ENCODE measurements at regions of chr11 and their contacts with region 1.

Region 1: GRCh38 chr11:62726915-62727763 is at the start of gene HNRNPUL2:
- DNase-seq: peak; percentile 98 to 99 (median 99)
- ATAC-seq: peak; percentile 79 to 81
- H3K4me3 Mint-ChIP-seq: peak within 1 kb of the TSS; percentile 92 to 99 (median 96)
- H3K27ac Mint-ChIP-seq: peak within 1 kb of the TSS; percentile 90 to 100 (median 99)
- H3K4me1 Mint-ChIP-seq: peaks cover 25 to 66% (median 53%) of the 10 kb centered on the region in 4 donors
- H3K27me3 Mint-ChIP-seq: peaks cover 0 to 2% (median 0%) of the 10 kb centered on the region in 5 donors
- polyA plus RNA-seq, gene HNRNPUL2: 0.99 to 3.0 (median 1.0) TPM

Region 2: DNA sequence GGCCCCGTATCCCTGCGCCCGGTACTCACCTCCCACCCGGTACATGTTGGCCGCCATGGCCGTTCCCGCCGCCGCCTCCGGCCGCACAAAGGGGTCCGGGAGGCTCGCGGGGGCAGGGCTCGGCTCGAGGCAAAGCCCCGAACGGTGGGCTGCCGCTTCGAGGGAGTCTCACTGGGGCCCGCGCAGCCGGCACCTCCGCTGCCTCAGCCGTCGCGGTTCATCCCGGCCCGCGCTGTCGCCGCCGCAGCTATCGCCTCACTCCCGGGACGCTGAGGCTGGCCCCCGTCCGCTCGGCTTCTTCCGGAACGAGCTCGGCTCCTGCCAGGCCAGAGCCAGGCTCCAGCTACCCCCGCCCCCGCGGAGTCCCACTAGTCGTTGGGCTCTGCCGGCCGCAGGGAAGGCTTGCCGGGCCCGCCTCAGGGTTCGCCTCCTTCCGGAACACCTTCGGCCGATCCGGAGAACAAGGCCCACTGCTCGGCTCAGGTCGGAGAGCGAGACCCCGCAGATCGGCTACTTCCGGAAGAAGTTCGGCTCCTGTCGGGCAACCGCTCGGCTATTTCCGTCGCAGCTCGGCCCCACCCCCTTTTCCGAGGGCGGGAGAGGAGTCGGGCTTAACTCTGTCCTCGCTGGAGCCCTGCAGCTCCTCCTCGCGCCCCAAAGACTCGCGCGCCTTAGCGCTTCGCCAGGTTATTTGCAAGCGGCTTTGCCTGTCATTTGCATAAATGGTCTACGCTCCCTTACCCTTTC is 125.6 kb before region 1 on chr11 and contains the start of gene MTA2:
- POLR2A ChIA-PET with region 1: interaction called, 47 read pairs
- DNase-seq: peak; percentile 95 to 100 (median 99)
- ATAC-seq: peak; percentile 82 to 83
- H3K4me3 Mint-ChIP-seq: peak within 1 kb of the TSS; percentile 88 to 95 (median 92)
- H3K27ac Mint-ChIP-seq: peak within 1 kb of the TSS; percentile 93 to 97 (median 96)
- H3K4me1 Mint-ChIP-seq: peaks cover 37 to 66% (median 62%) of the 10 kb centered on the region in 4 donors
- H3K27me3 Mint-ChIP-seq: no peaks in the 10 kb centered on the region
- polyA plus RNA-seq, gene MTA2: 15.8 to 32.6 (median 21.5) TPM

Region 3: GRCh38 chr11:62665075-62665598 is 62.0 kb before region 1 on chr11 and contains the starts of genes C11orf98 and CSKMT:
- POLR2A ChIA-PET with region 1: interaction called, 28 read pairs
- DNase-seq: peak; percentile 89 to 98 (median 96)
- ATAC-seq: peak; percentile 89 to 91
- H3K4me3 Mint-ChIP-seq: peak within 1 kb of the TSS; percentile 94 to 98 (median 95)
- H3K27ac Mint-ChIP-seq: peak within 1 kb of the TSS; percentile 86 to 97 (median 96)
- H3K4me1 Mint-ChIP-seq: peaks cover 22 to 49% (median 42%) of the 10 kb centered on the region in 4 donors
- H3K27me3 Mint-ChIP-seq: no peaks in the 10 kb centered on the region
- polyA plus RNA-seq, gene C11orf98: 99.9 to 149 (median 117) TPM
- polyA plus RNA-seq, gene CSKMT: 1.8 to 3.7 (median 3.4) TPM

Region 4: GRCh38 chr11:62753736-62754603 is 26.8 kb after region 1 on chr11 and contains the start of gene ZBTB3:
- POLR2A ChIA-PET with region 1: interaction called, 165 read pairs
- DNase-seq: peak; percentile 93 to 100 (median 96)
- ATAC-seq: peak; percentile 95 to 96
- H3K4me3 Mint-ChIP-seq: peak within 1 kb of the TSS; percentile 91 to 100 (median 97)
- H3K27ac Mint-ChIP-seq: peak within 1 kb of the TSS; percentile 88 to 100 (median 99)
- H3K4me1 Mint-ChIP-seq: peaks cover 8 to 43% (median 28%) of the 10 kb centered on the region in 4 donors
- H3K27me3 Mint-ChIP-seq: no peaks in the 10 kb centered on the region
- polyA plus RNA-seq, gene ZBTB3: 2.1 to 6.7 (median 3.6) TPM

Region 5: GRCh38 chr11:62831520-62832335 is 104.6 kb after region 1 on chr11 and contains the start of gene STX5:
- POLR2A ChIA-PET with region 1: interaction called, 22 read pairs
- DNase-seq: peak; percentile 99 to 100 (median 100)
- ATAC-seq: peak; percentile 89 to 90
- H3K4me3 Mint-ChIP-seq: peak within 1 kb of the TSS; percentile 93 to 99 (median 98)
- H3K27ac Mint-ChIP-seq: peak within 1 kb of the TSS; percentile 91 to 100 (median 100)
- H3K4me1 Mint-ChIP-seq: peaks cover 25 to 56% (median 48%) of the 10 kb centered on the region in 4 donors
- H3K27me3 Mint-ChIP-seq: no peaks in the 10 kb centered on the region
- polyA plus RNA-seq, gene STX5: 25.4 to 30.4 (median 26.2) TPM

Region 6: DNA sequence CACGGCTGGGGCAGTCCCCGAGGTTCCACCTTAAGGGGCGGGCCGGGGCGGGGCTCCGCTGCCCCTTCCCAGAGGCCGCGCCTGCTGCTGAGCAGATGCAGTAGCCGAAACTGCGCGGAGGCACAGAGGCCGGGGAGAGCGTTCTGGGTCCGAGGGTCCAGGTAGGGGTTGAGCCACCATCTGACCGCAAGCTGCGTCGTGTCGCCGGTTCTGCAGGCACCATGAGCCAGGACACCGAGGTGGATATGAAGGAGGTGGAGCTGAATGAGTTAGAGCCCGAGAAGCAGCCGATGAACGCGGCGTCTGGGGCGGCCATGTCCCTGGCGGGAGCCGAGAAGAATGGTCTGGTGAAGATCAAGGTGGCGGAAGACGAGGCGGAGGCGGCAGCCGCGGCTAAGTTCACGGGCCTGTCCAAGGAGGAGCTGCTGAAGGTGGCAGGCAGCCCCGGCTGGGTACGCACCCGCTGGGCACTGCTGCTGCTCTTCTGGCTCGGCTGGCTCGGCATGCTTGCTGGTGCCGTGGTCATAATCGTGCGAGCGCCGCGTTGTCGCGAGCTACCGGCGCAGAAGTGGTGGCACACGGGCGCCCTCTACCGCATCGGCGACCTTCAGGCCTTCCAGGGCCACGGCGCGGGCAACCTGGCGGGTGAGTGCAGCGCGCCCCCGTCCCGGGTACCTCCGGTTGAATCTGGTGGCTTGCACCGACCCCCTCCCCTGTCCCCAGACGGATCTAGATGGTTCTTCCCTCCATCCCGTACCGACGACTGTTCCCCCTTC is 153.9 kb after region 1 on chr11 and contains the start of gene SLC3A2:
- POLR2A ChIA-PET with region 1: interaction called, 27 read pairs
- DNase-seq: peak; percentile 77 to 90 (median 84)
- ATAC-seq: peak; percentile 81 to 82
- H3K4me3 Mint-ChIP-seq: peak within 1 kb of the TSS; percentile 96 to 100 (median 99)
- H3K27ac Mint-ChIP-seq: peak within 1 kb of the TSS; percentile 97 to 100 (median 100)
- H3K4me1 Mint-ChIP-seq: peaks cover 33 to 53% (median 51%) of the 10 kb centered on the region in 4 donors
- H3K27me3 Mint-ChIP-seq: no peaks in the 10 kb centered on the region
- polyA plus RNA-seq, gene SLC3A2: 119 to 164 (median 125) TPM